Ovary (tissue), 10 donors: ENCODE measurements at regions of chr22 and their contacts with region 1.

Region 1: GRCh38 chr22:45096256-45096907 is 67.3 kb upstream of the NUP50 start:
- DNase-seq: peak; percentile 23 to 56 (median 47)
- H3K4me3 ChIP-seq: no peak overlapping the region
- H3K27ac ChIP-seq: no peak overlapping the region
- H3K4me1 ChIP-seq: no peaks in the 10 kb centered on the region
- H3K27me3 ChIP-seq: no peaks in the 10 kb centered on the region
- CTCF ChIP-seq: peak; percentile 20 to 54 (median 39)
- EP300 ChIP-seq: no peak
- POLR2A ChIP-seq: no peak

Region 2: DNA sequence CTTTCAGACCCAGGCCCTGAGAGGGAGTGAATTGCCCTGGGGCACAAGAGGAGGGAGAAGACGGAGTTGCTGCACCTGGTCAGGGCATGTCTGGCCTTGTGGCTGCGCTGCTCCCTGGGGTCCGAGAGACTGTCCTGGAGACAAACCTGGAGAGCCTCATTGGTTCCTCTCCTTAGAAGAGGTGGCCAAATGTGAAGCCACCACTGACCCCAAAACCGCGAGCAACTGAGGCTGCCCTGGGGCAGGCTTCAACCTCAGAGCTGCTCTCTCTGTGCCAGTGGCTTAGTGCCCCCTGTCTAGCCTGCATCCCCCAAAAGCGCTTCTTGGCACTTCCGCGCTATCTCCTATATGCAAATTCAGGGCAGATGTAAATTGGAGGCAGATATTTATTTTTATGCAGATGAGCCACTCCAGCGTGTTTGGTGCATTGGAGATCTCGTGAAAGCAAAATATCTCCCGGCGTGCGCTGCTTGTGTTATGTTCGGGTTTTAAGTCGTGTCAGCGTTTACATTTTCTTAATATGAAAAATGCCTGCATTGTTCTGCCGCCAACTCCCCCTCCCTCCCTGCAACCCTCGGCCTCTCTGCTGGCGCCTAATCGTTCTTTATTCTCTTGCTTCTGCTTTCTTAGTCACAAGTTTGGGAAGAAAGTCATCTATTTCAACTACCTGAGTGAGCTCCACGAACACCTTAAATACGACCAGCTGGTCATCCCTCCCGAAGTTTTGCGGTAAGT is 274.5 kb before region 1 on chr22:
- intact Hi-C with region 1: loop called in 2 of 4 experiments (anchors 2 to 5 kb)
- DNase-seq: no peak
- H3K4me3 ChIP-seq: no peak overlapping the region
- H3K27ac ChIP-seq: no peak overlapping the region
- H3K4me1 ChIP-seq: no peaks in the 10 kb centered on the region
- H3K27me3 ChIP-seq: no peaks in the 10 kb centered on the region
- CTCF ChIP-seq: no peak
- EP300 ChIP-seq: no peak
- POLR2A ChIP-seq: no peak

Region 3: DNA sequence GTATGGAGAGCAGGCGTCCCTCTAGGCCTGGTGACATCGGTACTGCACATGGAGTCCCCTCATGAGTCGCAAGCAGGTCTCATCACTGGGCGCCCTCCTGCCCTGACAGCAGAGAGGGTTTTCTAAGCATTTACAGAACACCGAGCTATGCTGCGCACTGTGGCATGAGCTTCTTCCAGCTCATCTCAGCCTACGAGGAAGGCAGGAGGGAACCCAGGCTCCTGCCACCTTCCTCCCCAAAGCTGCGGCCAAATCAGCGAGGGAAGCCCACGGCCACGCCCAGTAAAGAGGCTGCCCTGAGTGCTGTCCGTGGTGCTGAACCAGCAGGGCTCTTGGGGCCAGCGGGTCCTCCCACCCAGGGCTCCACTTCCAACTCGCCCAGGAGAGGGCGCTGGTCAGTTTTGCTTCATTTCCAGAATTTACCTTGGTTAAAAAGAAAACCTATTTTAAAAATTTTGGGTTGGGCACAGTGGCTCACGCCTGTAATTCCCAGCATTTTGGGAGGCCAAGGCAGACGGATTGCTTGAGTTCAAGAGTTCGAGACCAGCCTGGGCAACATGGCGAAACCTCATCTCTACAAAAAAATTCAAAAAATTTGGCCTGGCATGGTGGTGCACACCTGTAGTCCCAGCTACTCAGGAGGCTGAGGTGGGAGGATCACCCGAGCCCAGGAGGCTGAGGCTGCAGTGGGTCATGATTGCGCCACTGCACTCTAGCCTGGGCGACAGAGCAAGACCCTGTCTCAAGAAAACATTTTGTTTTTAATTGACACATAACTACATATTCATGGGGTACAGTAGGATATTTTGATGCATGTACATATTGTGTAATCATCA is 120.7 kb before region 1 on chr22:
- intact Hi-C with region 1: loop called in 2 of 4 experiments (anchors 5 to 10 kb)
- DNase-seq: peak; percentile 73 to 93 (median 87)
- H3K4me3 ChIP-seq: no peak overlapping the region
- H3K27ac ChIP-seq: no peak overlapping the region
- H3K4me1 ChIP-seq: no peaks in the 10 kb centered on the region
- H3K27me3 ChIP-seq: no peaks in the 10 kb centered on the region
- CTCF ChIP-seq: peak; percentile 35 to 56 (median 44)
- EP300 ChIP-seq: no peak
- POLR2A ChIP-seq: no peak

Region 4: DNA sequence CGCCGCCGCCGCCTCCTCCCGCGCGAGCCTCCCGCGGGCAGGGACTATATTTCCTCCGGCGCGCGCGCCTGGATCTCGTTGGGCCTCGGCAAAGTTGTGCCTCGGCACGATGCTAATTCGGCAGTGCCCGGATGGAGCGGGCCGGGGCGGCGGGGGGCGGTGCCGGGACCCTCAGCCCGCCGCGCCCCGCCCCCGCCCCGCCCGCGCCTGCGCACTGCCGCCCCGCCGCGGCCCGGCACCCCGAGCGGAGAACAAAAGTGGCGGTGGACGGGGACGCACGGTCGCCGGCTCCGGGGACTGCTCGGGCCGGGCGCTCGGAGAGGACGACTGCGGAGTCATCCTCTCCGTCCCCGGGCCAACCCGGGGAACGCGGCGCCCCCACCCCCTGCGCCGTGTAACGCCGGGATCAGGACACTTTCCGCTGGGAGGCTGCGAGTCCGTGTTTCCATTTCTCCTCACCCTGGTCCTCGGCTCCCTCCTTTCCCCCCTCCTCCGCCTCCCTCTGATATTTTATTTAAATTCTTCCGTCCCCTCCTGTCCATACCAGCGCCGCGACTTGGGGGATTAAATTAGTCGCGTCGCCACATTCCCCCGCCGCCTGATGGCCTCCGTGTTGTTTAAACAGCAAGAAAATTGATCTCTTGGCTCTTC is 86.4 kb before region 1 on chr22 and contains the start of gene PHF21B:
- intact Hi-C with region 1: loop called in 1 of 4 experiments (anchors 10 kb)
- DNase-seq: peak; percentile 82 to 90 (median 83)
- H3K4me3 ChIP-seq: peak within 1 kb of the TSS; percentile 46
- H3K27ac ChIP-seq: peak within 1 kb of the TSS; percentile 67 to 71
- H3K4me1 ChIP-seq: peaks cover 7% of the 10 kb centered on the region
- H3K27me3 ChIP-seq: no peaks in the 10 kb centered on the region
- CTCF ChIP-seq: no peak
- EP300 ChIP-seq: no peak
- POLR2A ChIP-seq: peak; percentile 27
- total RNA-seq, gene PHF21B: 1.0 to 10.7 (median 7.3) TPM

Region 5: GRCh38 chr22:45435544-45436139 is 339.3 kb after region 1 on chr22:
- intact Hi-C with region 1: loop called in 1 of 4 experiments (anchors 10 kb)
- DNase-seq: peak; percentile 85 to 94 (median 90)
- H3K4me3 ChIP-seq: no peak overlapping the region
- H3K27ac ChIP-seq: peak overlapping the region in 1 of 2 donors; percentile 61
- H3K4me1 ChIP-seq: no peaks in the 10 kb centered on the region
- H3K27me3 ChIP-seq: no peaks in the 10 kb centered on the region
- CTCF ChIP-seq: peak; percentile 94 to 95 (median 94)
- EP300 ChIP-seq: no peak
- POLR2A ChIP-seq: peak; percentile 25